PC-9 (cell line): ENCODE measurements at regions of chr14 and their contacts with region 1.

Region 1: GRCh38 chr14:103855063-103855733 is 7.8 kb upstream of the PPP1R13B start:
- DNase-seq: peak; percentile 45 to 91
- H3K4me3 ChIP-seq: no peak overlapping the region
- H3K27ac ChIP-seq: peak overlapping the region; percentile 49; the same call in 1 of the 2 replicates
- H3K4me1 ChIP-seq: peaks cover 34% of the 10 kb centered on the region
- H3K27me3 ChIP-seq: no peaks in the 10 kb centered on the region
- CTCF ChIP-seq: no peak

Region 2: GRCh38 chr14:103696466-103697071 is 158.6 kb before region 1 on chr14:
- CTCF ChIA-PET with region 1: no interaction called
- POLR2A ChIA-PET with region 1: no interaction called
- intact Hi-C with region 1: no loop called
- DNase-seq: no peak
- H3K4me3 ChIP-seq: no peak overlapping the region
- H3K27ac ChIP-seq: no peak overlapping the region
- H3K4me1 ChIP-seq: peaks cover 15% of the 10 kb centered on the region
- H3K27me3 ChIP-seq: no peaks in the 10 kb centered on the region
- CTCF ChIP-seq: no peak

Region 3: DNA sequence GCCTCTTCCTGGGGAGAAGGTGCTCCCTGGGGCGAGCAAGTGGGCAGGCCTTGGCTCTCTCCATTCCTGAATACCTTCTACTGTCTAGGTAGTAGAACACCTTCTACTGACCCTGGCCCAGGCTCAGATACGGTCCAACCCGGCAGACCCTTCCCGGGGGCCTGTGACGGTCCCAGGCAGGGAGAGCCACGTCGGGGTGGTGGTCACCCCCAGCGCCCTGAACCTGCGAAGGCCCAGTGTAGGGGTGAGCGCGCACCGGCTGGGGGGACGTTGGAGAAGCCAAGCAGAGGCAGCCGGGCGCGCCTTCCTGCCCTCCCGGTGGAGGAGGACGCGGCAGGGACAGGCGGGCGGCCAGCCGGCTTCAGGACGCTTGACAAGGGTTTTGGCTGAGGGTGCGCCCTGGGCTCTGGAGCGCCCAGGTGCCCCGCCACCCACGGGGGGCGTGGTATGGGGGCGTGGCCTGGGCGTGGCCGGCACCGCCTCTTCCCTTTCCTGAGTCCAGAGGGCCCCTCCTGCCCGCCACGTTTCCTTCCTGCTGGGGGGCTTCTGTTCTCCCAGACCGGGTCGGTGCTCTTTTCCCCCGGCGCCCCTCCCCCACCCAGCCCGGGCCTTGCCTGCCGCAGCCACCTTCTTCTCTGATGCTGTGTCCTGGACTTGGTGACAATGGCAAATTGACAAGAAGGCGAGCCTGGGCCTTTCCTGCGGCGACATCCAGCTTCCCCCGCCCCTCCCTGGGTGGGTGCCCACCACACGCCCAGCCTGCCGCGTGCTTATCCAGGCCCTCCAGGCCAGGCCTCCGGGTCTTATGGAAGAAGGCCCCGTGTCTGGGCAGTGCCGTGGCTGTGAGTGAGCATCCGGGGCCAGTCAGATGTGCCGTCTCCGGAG is 16.6 kb after region 1 on chr14:
- CTCF ChIA-PET with region 1: interaction called, 18 read pairs
- POLR2A ChIA-PET with region 1: interaction called, 4 read pairs
- intact Hi-C with region 1: no loop called
- DNase-seq: peak in 1 of 2 experiments; percentile 74
- H3K4me3 ChIP-seq: no peak overlapping the region
- H3K27ac ChIP-seq: no peak overlapping the region
- H3K4me1 ChIP-seq: no peaks in the 10 kb centered on the region
- H3K27me3 ChIP-seq: no peaks in the 10 kb centered on the region
- CTCF ChIP-seq: no peak

Region 4: GRCh38 chr14:103879570-103880347 is 24.6 kb after region 1 on chr14:
- CTCF ChIA-PET with region 1: interaction called, 4 read pairs
- POLR2A ChIA-PET with region 1: interaction called, 14 read pairs
- intact Hi-C with region 1: no loop called
- DNase-seq: peak in 1 of 2 experiments; percentile 55
- H3K4me3 ChIP-seq: no peak overlapping the region
- H3K27ac ChIP-seq: no peak overlapping the region
- H3K4me1 ChIP-seq: no peaks in the 10 kb centered on the region; the same call in 1 of the 2 replicates
- H3K27me3 ChIP-seq: no peaks in the 10 kb centered on the region
- CTCF ChIP-seq: no peak

Region 5: DNA sequence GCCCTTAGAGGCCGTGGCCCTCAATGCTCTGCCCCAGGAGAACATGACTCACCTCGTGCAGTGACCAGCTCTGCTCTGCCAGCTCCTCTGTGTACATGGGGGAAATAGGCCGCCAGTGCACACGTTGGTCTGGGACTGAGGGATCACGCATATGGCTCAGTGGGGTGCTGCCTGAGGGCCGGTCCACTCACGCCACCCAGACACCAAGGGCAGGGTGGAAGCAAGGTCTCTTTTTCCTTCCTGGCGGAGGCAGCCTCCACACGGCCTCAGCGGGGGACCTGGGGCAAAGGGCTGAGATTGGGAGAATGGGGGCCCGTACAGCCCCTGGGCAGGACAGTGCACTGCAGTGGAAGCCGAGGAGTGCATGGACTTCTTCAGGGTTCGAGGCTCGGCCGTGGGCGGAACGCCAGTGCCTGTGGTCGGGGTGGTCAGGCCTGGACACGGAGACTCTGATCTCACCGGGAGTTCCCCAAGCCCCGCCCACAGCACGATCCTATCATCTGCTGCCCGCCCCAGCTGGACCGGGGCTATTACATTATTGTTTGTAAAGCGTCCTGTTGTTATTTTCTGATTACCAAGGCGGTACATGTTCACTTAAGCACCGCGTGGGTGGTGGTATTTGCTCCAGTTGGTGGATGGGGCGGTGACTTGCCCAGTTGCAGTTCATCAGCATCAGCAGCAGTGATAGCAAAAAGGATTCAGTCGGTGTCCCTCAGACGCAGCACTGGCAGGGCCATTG is 34.3 kb after region 1 on chr14:
- CTCF ChIA-PET with region 1: no interaction called
- POLR2A ChIA-PET with region 1: interaction called, 4 read pairs
- intact Hi-C with region 1: loop called (anchors 2 kb)
- DNase-seq: peak in 1 of 2 experiments; percentile 56
- H3K4me3 ChIP-seq: no peak overlapping the region
- H3K27ac ChIP-seq: no peak overlapping the region
- H3K4me1 ChIP-seq: peaks cover 20% of the 10 kb centered on the region
- H3K27me3 ChIP-seq: no peaks in the 10 kb centered on the region
- CTCF ChIP-seq: no peak